PC-3 (cell line): ENCODE measurements at regions of chr2 and their contacts with region 1.

Region 1: GRCh38 chr2:165015052-165015642 is 59.8 kb upstream of the SLC38A11 start:
- DNase-seq: peak; percentile 81
- ATAC-seq: peak; percentile 90
- H3K4me3 ChIP-seq: no peak overlapping the region
- H3K27ac ChIP-seq: no peak overlapping the region
- H3K4me1 ChIP-seq: no peaks in the 10 kb centered on the region
- H3K27me3 ChIP-seq: no peaks in the 10 kb centered on the region
- CTCF ChIP-seq: peak; percentile 94

Region 2: DNA sequence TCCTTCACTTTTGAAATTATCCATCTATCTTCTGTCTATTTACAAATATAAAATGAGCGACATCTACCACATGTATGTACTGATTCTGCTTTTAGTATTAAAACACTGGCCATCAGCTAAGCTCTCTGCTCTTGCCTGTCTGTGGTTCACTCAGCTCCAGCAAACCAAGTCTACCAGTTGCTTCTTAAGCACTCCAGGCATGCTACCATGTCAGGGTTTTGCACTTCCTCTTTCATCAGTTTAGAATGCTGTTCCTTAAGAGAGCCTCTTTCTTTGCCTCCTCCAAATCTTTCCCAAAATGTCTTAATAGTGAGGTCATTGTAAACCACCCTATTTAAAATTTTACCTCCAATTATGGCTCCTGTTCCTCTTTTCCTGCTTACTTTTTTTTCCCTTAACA is 129.2 kb after region 1 on chr2:
- CTCF ChIA-PET with region 1: no interaction called
- POLR2A ChIA-PET with region 1: no interaction called
- intact Hi-C with region 1: loop called (anchors 5 kb)
- DNase-seq: no peak
- ATAC-seq: no peak
- H3K4me3 ChIP-seq: no peak overlapping the region
- H3K27ac ChIP-seq: no peak overlapping the region
- H3K4me1 ChIP-seq: no peaks in the 10 kb centered on the region
- H3K27me3 ChIP-seq: 0 out of 2 replicates have a peak, but pooled peaks cover 6% of the 10 kb centered on the region
- CTCF ChIP-seq: no peak

Region 3: GRCh38 chr2:165203689-165204559 is 188.8 kb after region 1 on chr2 and contains the start of gene SCN3A:
- CTCF ChIA-PET with region 1: interaction called, 33 read pairs
- POLR2A ChIA-PET with region 1: no interaction called
- intact Hi-C with region 1: loop called (anchors 1 kb)
- DNase-seq: peak; percentile 71
- ATAC-seq: peak; percentile 57
- H3K4me3 ChIP-seq: no peak within 1 kb of the TSS
- H3K27ac ChIP-seq: no peak within 1 kb of the TSS
- H3K4me1 ChIP-seq: no peaks in the 10 kb centered on the region
- H3K27me3 ChIP-seq: peaks cover 22% of the 10 kb centered on the region
- CTCF ChIP-seq: peak; percentile 83
- total RNA-seq, gene SCN3A: 0.07 and 0.12 TPM in 2 replicates

Region 4: DNA sequence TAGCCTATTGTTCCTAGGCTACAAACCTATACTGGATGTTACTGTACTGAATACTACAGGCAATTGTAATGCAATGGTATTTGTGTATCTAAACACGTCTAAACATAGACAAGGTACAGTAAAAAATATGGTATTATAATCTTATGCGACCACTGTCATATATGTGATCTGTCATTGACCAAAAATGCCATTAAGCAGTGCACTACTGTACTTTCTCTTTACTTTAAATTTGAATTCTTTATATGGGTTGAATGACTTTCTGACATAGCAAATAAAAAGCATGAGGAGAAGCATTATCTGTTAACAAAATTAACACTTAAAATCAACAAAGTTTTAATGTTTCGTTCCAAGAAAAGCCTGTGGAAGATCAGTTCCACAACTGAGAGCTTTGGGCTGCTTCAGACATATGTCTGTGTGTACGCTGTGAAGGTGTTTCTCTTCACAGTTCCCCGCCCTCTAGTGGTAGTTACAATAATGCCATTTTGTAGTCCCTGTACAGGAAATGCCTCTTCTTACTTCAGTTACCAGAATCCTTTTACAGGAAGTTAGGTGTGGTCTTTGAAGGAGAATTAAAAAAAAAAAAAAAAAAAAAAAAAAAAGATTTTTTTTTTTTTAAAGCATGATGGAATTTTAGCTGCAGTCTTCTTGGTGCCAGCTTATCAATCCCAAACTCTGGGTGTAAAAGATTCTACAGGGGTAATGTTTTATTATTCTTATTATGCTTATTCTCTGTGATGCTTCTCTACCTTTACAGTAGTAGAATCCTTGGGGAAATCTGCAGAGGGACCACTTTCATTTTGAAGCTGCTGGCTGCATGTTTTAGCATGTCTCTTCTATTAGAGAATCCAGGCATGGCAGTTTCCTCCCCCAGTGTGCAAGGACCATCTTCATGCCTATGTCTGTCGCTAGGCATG is 278.6 kb after region 1 on chr2:
- CTCF ChIA-PET with region 1: interaction called, 8 read pairs
- POLR2A ChIA-PET with region 1: interaction called, 3 read pairs
- intact Hi-C with region 1: loop called (anchors 5 kb)
- DNase-seq: peak; percentile 90
- ATAC-seq: peak; percentile 100
- H3K4me3 ChIP-seq: peak overlapping the region; percentile 46; the same call in 1 of the 2 replicates
- H3K27ac ChIP-seq: no peak overlapping the region
- H3K4me1 ChIP-seq: no peaks in the 10 kb centered on the region; the same call in 1 of the 2 replicates
- H3K27me3 ChIP-seq: peaks cover 5% of the 10 kb centered on the region; the same call in 1 of the 2 replicates
- CTCF ChIP-seq: peak; percentile 70

Region 5: GRCh38 chr2:165305391-165306096 is 290.4 kb after region 1 on chr2:
- CTCF ChIA-PET with region 1: no interaction called
- POLR2A ChIA-PET with region 1: no interaction called
- intact Hi-C with region 1: loop called (anchors 5 kb)
- DNase-seq: no peak
- ATAC-seq: no peak
- H3K4me3 ChIP-seq: no peak overlapping the region
- H3K27ac ChIP-seq: no peak overlapping the region
- H3K4me1 ChIP-seq: no peaks in the 10 kb centered on the region
- H3K27me3 ChIP-seq: 0 out of 2 replicates have a peak, but pooled peaks cover 6% of the 10 kb centered on the region
- CTCF ChIP-seq: no peak

Region 6: DNA sequence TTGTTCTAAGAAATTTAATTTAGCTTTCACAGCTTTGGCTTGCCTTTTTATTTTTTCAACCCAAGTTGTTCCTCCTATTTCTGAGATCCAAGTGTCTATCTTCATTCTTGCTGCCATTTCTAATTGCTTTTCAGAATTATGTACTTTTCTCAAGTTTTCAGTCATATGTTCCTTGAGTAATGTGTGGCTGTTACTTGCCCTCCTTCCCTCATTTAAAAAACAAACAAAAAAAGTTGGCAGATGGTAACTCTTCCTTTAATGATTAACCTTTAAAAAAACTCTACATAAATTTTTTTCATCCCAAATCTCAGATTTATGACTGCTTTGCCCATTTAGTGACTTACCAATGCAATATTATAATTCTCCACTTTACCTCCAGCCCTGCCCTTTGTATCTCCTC is 647.6 kb after region 1 on chr2:
- CTCF ChIA-PET with region 1: no interaction called
- POLR2A ChIA-PET with region 1: interaction called, 12 read pairs
- intact Hi-C with region 1: no loop called
- DNase-seq: no peak
- ATAC-seq: no peak
- H3K4me3 ChIP-seq: no peak overlapping the region
- H3K27ac ChIP-seq: no peak overlapping the region
- H3K4me1 ChIP-seq: no peaks in the 10 kb centered on the region
- H3K27me3 ChIP-seq: no peaks in the 10 kb centered on the region
- CTCF ChIP-seq: no peak